ENCODE measurements at regions of chr3 and their contacts with region 1.

Region 1: DNA sequence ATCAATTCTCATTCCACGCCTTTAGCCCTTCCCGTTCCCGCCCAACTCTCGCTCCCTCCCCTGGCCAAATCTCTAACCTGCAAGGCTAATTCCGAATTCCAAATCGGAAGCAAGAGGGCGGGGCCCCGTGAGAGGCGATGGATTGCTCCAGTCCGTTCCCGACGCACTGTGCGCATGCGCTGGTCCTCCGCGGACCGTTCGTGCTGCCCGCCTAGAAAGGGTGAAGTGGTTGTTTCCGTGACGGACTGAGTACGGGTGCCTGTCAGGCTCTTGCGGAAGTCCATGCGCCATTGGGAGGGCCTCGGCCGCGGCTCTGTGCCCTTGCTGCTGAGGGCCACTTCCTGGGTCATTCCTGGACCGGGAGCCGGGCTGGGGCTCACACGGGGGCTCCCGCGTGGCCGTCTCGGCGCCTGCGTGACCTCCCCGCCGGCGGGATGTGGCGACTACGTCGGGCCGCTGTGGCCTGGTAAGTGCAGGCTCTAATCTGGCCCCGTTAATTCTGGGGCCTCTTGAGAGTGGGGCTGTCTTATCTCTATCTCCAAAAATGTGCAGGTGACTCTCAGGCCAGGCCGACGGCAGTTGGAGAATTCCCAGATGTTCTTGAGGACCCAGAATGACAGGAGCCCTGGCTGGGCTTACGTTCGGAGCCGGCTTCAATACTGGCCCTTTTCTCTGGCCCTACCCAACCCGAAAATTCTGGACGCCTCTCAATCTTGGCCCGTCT is at the start of gene OPA1:
- DNase-seq: peak; percentile 90
- H3K4me3 Mint-ChIP-seq: peak within 1 kb of the TSS; percentile 98
- H3K27ac Mint-ChIP-seq: peak within 1 kb of the TSS; percentile 99
- H3K4me1 Mint-ChIP-seq: peaks cover 49% of the 10 kb centered on the region
- H3K27me3 Mint-ChIP-seq: no peaks in the 10 kb centered on the region
- total RNA-seq, gene OPA1: 78.1 and 91.2 TPM in 2 replicates

Region 2: DNA sequence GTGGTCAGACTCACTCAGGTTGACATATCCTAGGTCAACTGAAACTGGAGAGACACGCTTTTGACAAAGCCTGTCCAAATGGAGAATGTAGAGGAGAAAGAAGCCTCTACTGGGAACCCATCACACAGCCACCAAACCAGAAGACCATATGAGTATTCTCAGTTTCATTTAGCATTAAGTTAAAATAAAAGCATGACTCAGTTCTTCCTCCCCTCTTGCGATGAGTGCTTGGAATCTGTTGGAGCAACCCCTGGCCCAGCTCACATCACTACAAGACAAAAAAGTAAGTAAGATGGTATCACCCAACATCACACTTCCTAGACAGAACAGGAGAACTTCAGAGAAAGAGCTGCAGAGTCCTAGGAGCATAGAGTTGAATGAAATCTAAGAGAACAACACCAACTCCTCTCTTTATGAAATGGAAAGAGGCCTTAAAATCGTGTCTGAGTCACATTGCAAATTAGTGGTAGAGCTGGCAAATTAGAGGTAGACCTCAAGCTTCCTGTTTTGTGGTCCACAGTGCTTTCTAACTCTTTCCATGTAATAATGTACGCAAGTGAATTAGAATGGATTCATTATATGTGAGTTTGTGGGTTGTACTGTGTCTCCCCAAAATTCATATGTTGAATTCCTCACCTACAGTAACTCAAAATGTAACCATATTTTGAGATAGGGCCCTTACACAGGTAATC is 917.0 kb before region 1 on chr3:
- intact Hi-C with region 1: loop called (anchors 1 kb)
- DNase-seq: no peak
- H3K4me3 Mint-ChIP-seq: no peak overlapping the region
- H3K27ac Mint-ChIP-seq: peak overlapping the region; percentile 97
- H3K4me1 Mint-ChIP-seq: peaks cover 12% of the 10 kb centered on the region
- H3K27me3 Mint-ChIP-seq: peaks cover 12% of the 10 kb centered on the region

Region 3: DNA sequence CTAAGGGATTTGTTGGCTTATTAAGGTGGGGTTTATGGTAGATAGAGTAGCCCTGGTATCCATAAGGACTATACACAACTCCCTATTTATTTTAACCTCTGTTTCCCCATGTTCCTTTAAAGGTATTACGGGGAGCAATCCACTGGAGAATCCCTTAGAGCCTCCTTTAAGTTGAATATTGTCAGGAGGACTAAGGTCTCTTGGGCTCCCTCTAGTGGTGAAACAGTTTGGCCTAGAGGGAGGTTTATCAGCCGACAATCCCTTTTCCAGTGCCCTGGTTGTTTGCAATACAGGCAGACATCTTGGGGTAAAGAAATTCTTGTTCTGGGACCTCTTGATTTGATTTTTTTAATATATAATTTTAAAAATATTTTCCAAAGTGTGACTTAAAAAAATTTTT is 12.8 kb after region 1 on chr3:
- intact Hi-C with region 1: loop called (anchors 1 kb)
- DNase-seq: peak; percentile 34
- H3K4me3 Mint-ChIP-seq: no peak overlapping the region
- H3K27ac Mint-ChIP-seq: no peak overlapping the region
- H3K4me1 Mint-ChIP-seq: peaks cover 24% of the 10 kb centered on the region
- H3K27me3 Mint-ChIP-seq: no peaks in the 10 kb centered on the region

Region 4: GRCh38 chr3:193614430-193614829 is 21.3 kb after region 1 on chr3:
- intact Hi-C with region 1: loop called (anchors 2 kb)
- DNase-seq: no peak
- H3K4me3 Mint-ChIP-seq: peak overlapping the region; percentile 13
- H3K27ac Mint-ChIP-seq: peak overlapping the region; percentile 61
- H3K4me1 Mint-ChIP-seq: peaks cover 22% of the 10 kb centered on the region
- H3K27me3 Mint-ChIP-seq: no peaks in the 10 kb centered on the region

Region 5: GRCh38 chr3:193645806-193646205 is 52.7 kb after region 1 on chr3:
- intact Hi-C with region 1: no loop called
- DNase-seq: no peak
- H3K4me3 Mint-ChIP-seq: no peak overlapping the region
- H3K27ac Mint-ChIP-seq: no peak overlapping the region
- H3K4me1 Mint-ChIP-seq: no peaks in the 10 kb centered on the region
- H3K27me3 Mint-ChIP-seq: no peaks in the 10 kb centered on the region

Region 6: DNA sequence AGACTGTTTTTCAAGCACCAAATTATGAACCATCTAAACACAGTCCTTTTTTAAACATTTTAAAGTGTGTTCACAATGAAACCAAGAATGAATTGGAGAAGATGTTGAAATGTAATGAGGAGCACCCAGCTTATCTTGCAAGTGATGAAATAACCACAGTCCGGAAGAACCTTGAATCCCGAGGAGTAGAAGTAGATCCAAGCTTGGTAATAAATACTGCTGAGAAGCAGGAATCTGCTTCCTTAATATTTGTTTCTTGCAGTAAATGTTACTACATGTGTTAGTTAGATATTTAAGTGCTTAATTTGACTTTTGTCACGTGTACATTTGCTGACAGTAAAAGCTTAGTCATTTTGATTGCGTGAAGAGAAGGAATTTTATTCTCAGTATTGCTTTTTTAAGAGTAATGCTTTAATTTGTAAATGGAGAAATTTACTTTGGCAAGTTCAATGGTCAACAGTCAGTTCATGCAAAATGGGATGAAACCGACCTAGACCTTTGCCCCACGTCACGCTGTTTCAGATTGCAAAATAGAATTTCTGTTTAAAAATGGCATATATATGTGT is 69.7 kb after region 1 on chr3:
- intact Hi-C with region 1: no loop called
- DNase-seq: no peak
- H3K4me3 Mint-ChIP-seq: no peak overlapping the region
- H3K27ac Mint-ChIP-seq: no peak overlapping the region
- H3K4me1 Mint-ChIP-seq: no peaks in the 10 kb centered on the region
- H3K27me3 Mint-ChIP-seq: no peaks in the 10 kb centered on the region

Region 7: DNA sequence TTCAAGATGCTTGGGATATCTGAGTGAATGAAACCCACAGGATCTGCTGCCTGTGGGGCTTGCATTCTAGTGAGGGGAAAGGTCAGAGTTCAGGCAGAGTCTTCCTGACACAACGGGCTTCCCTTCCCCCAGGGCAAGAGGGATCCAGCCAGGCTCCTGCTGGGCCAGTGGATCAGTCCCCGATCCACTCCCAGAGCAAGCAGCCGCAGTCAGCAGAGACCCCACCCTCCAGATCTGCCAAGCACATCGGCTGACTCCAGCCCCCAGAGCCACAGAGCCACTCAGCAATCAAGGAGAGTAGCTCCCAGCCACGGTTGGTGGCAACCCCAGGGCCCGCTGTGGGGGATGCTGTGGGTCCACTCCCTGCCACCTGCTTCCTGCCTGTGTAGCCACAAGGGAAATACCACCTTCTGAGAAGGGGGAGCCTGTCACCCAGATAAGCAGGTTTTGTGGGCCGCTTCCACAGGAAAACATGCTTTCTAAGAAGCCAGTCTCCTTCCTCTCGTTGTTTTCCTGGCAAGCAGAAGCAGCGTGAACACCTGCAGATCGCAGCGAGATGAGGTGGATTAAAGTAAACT is 713.1 kb after region 1 on chr3:
- intact Hi-C with region 1: loop called (anchors 5 kb)
- DNase-seq: peak; percentile 65
- H3K4me3 Mint-ChIP-seq: peak overlapping the region; percentile 69
- H3K27ac Mint-ChIP-seq: peak overlapping the region; percentile 82
- H3K4me1 Mint-ChIP-seq: peaks cover 63% of the 10 kb centered on the region
- H3K27me3 Mint-ChIP-seq: peaks cover 2% of the 10 kb centered on the region

Measured in activated T-helper 1 cell treated with anti-CD3 and anti-CD28 coated beads, Interleukin-12 subunit alpha, Interleukin-12 subunit beta, Interleukin-2, Interleukin-4 antibody, amounts not matched to agents 30 ng/mL and 10 ng/mL and 1 ng/mL, durations not matched to agents 14 hours and 24 hours and 36 hours (primary cell).